Heart right ventricle (tissue), 16 donors: ENCODE measurements at regions of chr12 and their contacts with region 1.

Region 1: DNA sequence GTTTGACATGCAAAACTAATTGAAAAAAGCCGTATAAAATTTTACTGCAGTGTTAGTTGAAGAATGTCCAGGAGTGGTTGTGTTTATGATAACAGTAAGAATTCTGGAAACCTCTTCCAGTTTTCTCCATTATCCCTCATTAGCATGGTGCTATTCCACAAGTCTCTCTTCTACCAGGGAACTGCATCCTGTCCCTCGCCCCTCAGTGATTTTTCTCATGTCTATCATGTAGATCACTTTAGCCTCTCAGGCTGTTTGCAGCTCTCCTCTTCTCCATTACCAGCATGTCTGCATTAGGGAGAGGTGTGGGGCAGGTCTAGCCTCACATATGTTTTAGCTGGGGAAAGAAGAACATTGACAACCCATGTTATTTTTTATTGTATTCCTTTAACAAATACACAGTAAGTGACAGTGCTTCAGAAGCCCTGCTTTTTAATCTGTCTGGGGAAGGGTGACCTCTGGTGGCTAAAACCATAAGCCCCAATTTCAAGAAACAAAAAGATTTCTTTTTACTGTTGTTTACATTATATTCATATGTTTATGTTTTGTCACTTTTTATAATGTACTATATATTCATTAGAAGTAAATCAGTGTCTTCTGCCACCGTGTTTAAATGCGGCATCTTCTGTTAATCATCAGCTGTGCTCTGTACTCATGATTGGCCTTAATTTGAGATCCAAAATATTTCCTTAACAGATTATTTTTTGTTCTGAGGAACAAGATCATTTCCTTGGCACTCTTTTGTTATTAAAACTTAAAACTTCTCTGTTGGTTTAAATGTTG is 70.7 kb downstream of the RASSF8 start:
- DNase-seq: peak in 1 of 2 donors; percentile 32
- ATAC-seq: peak in 7 of 8 donors; percentile 56 to 76 (median 68)
- H3K4me3 ChIP-seq: no peak overlapping the region
- H3K27ac ChIP-seq: peak overlapping the region in 2 of 10 donors; percentile 9 to 10
- H3K4me1 ChIP-seq: peaks cover 0 to 38% (median 14%) of the 10 kb centered on the region in 9 donors
- H3K27me3 ChIP-seq: no peaks in the 10 kb centered on the region
- CTCF ChIP-seq: peak; percentile 68 to 94 (median 85)

Region 2: GRCh38 chr12:25677232-25677937 is 351.8 kb before region 1 on chr12:
- intact Hi-C with region 1: loop called in 2 of 10 experiments (anchors 5 kb)
- DNase-seq: no peak
- ATAC-seq: peak in 2 of 8 donors; percentile 39 to 42
- H3K4me3 ChIP-seq: no peak overlapping the region
- H3K27ac ChIP-seq: no peak overlapping the region
- H3K4me1 ChIP-seq: no peaks in the 10 kb centered on the region
- H3K27me3 ChIP-seq: no peaks in the 10 kb centered on the region
- CTCF ChIP-seq: peak in 3 of 9 donors; percentile 10 to 52 (median 39)

Region 3: GRCh38 chr12:25796523-25797000 is 232.6 kb before region 1 on chr12:
- intact Hi-C with region 1: loop called in 1 of 10 experiments (anchors 5 kb)
- DNase-seq: no peak
- ATAC-seq: peak in 1 of 8 donors; percentile 27
- H3K4me3 ChIP-seq: no peak overlapping the region
- H3K27ac ChIP-seq: no peak overlapping the region
- H3K4me1 ChIP-seq: peaks cover 0 to under 1% (median 0%) of the 10 kb centered on the region in 9 donors
- H3K27me3 ChIP-seq: no peaks in the 10 kb centered on the region
- CTCF ChIP-seq: no peak

Region 4: DNA sequence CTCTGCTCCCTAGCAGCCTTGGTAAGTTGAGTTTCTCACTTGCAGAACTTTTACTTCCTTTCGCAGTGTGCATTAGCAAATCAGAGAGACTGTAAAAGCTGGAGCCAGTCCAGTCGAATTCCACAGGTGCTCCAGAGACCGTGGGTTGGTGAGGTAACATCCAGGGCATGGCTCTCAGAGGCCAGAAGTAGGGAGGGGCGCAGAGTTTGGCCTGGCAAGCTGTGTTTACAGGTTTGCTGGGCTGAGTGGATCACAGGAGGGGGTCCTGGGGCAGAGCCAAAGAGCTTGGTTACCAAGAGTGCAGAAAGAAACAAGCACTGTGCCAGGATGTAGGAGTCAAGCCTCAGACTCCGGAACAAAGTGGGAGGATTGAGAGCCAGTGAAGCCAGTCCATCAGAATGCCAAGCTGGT is 105.9 kb after region 1 on chr12:
- intact Hi-C with region 1: no loop called
- DNase-seq: no peak
- ATAC-seq: peak in 4 of 8 donors; percentile 16 to 47 (median 38)
- H3K4me3 ChIP-seq: no peak overlapping the region
- H3K27ac ChIP-seq: no peak overlapping the region
- H3K4me1 ChIP-seq: peaks cover 0 to 9% (median 0%) of the 10 kb centered on the region in 9 donors
- H3K27me3 ChIP-seq: peaks cover 0 to 8% (median 0%) of the 10 kb centered on the region in 7 donors
- CTCF ChIP-seq: no peak